Upper lobe of right lung (tissue), 1 donor: ENCODE measurements at regions of chr9 and their contacts with region 1.

Region 1: GRCh38 chr9:25505644-25506043 is 172.6 kb downstream of the TUSC1 start:
- DNase-seq: no peak
- ATAC-seq: no peak
- H3K4me3 ChIP-seq: no peak overlapping the region
- H3K27ac ChIP-seq: no peak overlapping the region
- H3K4me1 ChIP-seq: no peaks in the 10 kb centered on the region
- H3K27me3 ChIP-seq: no peaks in the 10 kb centered on the region
- CTCF ChIP-seq: no peak

Region 2: DNA sequence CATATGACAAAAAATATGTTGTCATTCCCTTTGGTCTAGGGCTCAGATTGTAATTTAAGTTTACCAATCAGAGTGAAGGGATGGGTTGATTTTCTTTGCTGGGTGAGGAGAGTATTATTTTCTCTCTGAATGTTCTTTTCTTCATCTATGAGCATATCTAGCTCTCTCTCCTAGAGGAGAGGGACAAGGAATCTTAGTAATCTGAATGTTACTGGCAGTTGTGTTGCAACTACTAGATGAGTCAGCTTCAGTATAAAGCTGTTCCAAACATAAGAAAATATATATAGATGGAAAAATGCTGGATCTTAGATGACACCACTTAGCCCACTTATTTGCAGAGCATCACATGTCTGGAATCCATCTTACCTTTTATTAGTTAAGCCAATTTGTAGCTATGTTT is 86.7 kb before region 1 on chr9:
- intact Hi-C with region 1: no loop called
- DNase-seq: no peak
- ATAC-seq: no peak
- H3K4me3 ChIP-seq: no peak overlapping the region
- H3K27ac ChIP-seq: no peak overlapping the region
- H3K4me1 ChIP-seq: no peaks in the 10 kb centered on the region
- H3K27me3 ChIP-seq: no peaks in the 10 kb centered on the region
- CTCF ChIP-seq: no peak

Region 3: GRCh38 chr9:25442526-25442925 is 63.1 kb before region 1 on chr9:
- intact Hi-C with region 1: loop called (anchors 10 kb)
- DNase-seq: no peak
- ATAC-seq: no peak
- H3K4me3 ChIP-seq: no peak overlapping the region
- H3K27ac ChIP-seq: no peak overlapping the region
- H3K4me1 ChIP-seq: no peaks in the 10 kb centered on the region
- H3K27me3 ChIP-seq: no peaks in the 10 kb centered on the region
- CTCF ChIP-seq: no peak